Panc1 (cell line): ENCODE measurements at regions of chrX and their contacts with region 1.

Region 1: GRCh38 chrX:54945224-54945623 is 24.6 kb downstream of the TRO start:
- DNase-seq: no peak
- ATAC-seq: no peak
- H3K4me3 ChIP-seq: no peak overlapping the region
- H3K27ac ChIP-seq: no peak overlapping the region
- H3K4me1 ChIP-seq: no peaks in the 10 kb centered on the region
- H3K27me3 ChIP-seq: no peaks in the 10 kb centered on the region
- CTCF ChIP-seq: no peak

Region 2: GRCh38 chrX:53864591-53864990 is 1080.6 kb before region 1 on chrX:
- CTCF ChIA-PET with region 1: no interaction called
- POLR2A ChIA-PET with region 1: no interaction called
- in situ Hi-C with region 1: no loop called
- intact Hi-C with region 1: no loop called
- DNase-seq: no peak
- ATAC-seq: no peak
- H3K4me3 ChIP-seq: no peak overlapping the region
- H3K27ac ChIP-seq: no peak overlapping the region
- H3K4me1 ChIP-seq: no peaks in the 10 kb centered on the region
- H3K27me3 ChIP-seq: no peaks in the 10 kb centered on the region
- CTCF ChIP-seq: no peak

Region 3: DNA sequence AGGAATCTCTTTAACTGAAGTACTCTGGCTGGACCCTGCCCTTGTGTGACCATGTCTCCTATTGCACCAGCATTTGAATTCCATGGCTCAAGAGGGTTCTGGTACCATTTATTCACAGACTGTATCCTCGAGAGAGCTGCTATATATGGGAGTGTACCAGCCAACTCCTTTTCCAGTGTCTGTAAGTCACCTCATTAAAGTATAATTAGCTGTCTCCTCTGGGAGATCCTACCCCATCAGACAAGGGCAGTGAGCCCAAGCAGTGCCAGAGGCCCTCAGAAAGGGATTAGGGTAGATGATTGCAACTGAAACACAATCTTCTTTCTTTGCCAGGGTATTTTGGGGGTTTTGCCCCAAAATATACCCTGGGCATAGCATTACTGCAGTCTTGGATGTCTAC is 383.6 kb before region 1 on chrX:
- CTCF ChIA-PET with region 1: no interaction called
- POLR2A ChIA-PET with region 1: interaction called, 10 read pairs
- in situ Hi-C with region 1: no loop called
- intact Hi-C with region 1: no loop called
- DNase-seq: no peak
- ATAC-seq: no peak
- H3K4me3 ChIP-seq: no peak overlapping the region
- H3K27ac ChIP-seq: no peak overlapping the region
- H3K4me1 ChIP-seq: no peaks in the 10 kb centered on the region
- H3K27me3 ChIP-seq: no peaks in the 10 kb centered on the region
- CTCF ChIP-seq: no peak